Right lobe of liver (tissue), 6 donors: ENCODE measurements at regions of chr11 and their contacts with region 1.

Region 1: DNA sequence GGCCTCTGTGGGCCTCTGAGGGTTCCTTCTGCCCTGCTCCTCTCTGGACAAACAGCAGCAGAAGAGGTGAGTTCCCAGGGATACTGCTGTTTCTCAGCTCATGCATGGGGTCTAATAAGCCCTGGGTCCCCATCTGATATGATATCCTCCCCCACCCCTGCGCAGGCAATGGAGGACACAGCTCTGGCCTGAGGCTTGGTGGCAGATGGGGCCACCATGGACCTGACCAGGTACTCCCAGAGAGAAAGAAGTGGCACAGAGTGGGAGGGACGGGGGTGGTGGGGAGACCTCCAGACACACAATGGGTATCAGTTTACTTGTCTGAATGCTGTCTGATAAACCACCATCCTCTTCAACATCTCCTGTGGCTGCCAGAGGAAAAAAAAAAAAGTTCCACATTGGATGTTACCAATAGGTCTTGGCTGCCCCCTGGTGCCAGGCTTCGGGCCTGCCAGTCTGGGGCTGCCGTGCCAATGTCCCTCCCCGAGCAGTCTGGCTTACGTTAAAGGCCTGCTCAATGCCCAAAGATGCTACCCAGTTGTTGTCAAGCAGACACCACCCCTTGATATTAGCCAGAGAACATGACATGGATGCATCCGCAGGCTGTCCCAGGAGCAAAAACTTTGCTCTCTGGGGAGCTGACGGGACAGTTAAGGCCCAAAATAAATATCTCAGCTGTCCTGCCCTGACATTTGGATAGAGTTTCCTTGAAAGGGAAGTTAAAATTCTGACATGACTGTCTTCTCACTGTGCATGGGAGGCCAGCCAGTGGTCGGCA is 27.9 kb upstream of the ABCC8 start:
- DNase-seq: peak; percentile 82 to 84 (median 82)
- ATAC-seq: peak; percentile 88 to 96 (median 93)
- H3K4me3 ChIP-seq: no peak overlapping the region
- H3K27ac ChIP-seq: no peak overlapping the region
- H3K4me1 ChIP-seq: no peaks in the 10 kb centered on the region
- H3K27me3 ChIP-seq: no peaks in the 10 kb centered on the region
- CTCF ChIP-seq: peak; percentile 92 to 98 (median 94)
- POLR2A ChIP-seq: no peak

Region 2: DNA sequence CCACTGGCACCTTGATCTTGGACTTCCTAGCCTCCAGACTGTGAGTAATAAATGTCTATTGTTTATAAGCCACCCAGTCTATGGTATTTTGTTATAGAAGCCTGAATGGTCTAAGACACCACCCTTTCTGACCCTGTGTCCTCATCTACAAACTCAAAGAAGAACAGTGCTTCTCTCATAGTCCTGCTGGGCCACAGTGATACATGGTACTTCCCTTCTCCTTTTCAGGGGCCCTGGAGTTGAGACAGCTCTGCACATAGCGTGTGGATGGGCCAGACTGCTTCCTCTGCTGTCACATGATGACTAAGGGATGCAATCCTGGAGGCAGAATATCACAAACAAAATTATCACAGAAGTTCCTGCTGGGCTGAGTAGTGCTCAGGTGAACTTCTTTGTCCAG is 121.1 kb before region 1 on chr11:
- intact Hi-C with region 1: loop called (anchors 2 to 5 kb)
- DNase-seq: no peak
- ATAC-seq: peak in 2 of 4 donors; percentile 7 to 9
- H3K4me3 ChIP-seq: no peak overlapping the region
- H3K27ac ChIP-seq: no peak overlapping the region
- H3K4me1 ChIP-seq: no peaks in the 10 kb centered on the region
- H3K27me3 ChIP-seq: no peaks in the 10 kb centered on the region
- CTCF ChIP-seq: no peak
- POLR2A ChIP-seq: no peak

Region 3: GRCh38 chr11:17389211-17389956 is 115.1 kb before region 1 on chr11:
- intact Hi-C with region 1: loop called in 1 of 2 experiments (anchors 5 kb)
- DNase-seq: peak; percentile 83 to 90 (median 85)
- ATAC-seq: peak; percentile 86 to 94 (median 92)
- H3K4me3 ChIP-seq: peak overlapping the region; percentile 47 to 53 (median 51)
- H3K27ac ChIP-seq: peak overlapping the region in 1 of 3 donors; percentile 15
- H3K4me1 ChIP-seq: no peaks in the 10 kb centered on the region
- H3K27me3 ChIP-seq: no peaks in the 10 kb centered on the region
- CTCF ChIP-seq: peak; percentile 69 to 85 (median 78)
- POLR2A ChIP-seq: no peak

Region 4: DNA sequence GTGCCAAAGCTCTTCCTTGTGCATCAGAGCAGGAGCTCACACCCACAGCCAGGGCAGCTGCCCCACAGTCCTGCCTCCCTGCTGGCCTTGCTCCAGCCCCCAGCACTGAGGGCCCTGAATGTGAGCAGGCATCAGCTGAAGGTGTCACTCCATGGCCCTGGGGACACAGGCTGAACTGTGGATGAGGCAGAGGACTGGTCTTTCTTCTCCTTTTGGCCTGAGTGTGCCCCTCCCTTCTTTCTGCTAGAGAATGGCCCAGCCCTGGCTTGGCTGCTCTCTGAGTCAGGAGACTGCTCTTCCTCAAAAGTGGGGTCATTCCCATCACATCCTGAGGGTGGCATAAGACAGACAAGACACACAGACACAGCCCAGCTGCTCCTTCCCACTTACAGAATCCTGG is 58.7 kb after region 1 on chr11:
- intact Hi-C with region 1: no loop called
- DNase-seq: peak in 1 of 3 donors; percentile 36
- ATAC-seq: peak in 2 of 4 donors; percentile 22 to 34
- H3K4me3 ChIP-seq: no peak overlapping the region
- H3K27ac ChIP-seq: no peak overlapping the region
- H3K4me1 ChIP-seq: no peaks in the 10 kb centered on the region
- H3K27me3 ChIP-seq: no peaks in the 10 kb centered on the region
- CTCF ChIP-seq: no peak
- POLR2A ChIP-seq: no peak

Region 5: GRCh38 chr11:17598700-17599459 is 94.4 kb after region 1 on chr11:
- intact Hi-C with region 1: no loop called
- DNase-seq: peak; percentile 71 to 80 (median 77)
- ATAC-seq: peak; percentile 86 to 98 (median 93)
- H3K4me3 ChIP-seq: no peak overlapping the region
- H3K27ac ChIP-seq: no peak overlapping the region
- H3K4me1 ChIP-seq: no peaks in the 10 kb centered on the region
- H3K27me3 ChIP-seq: no peaks in the 10 kb centered on the region
- CTCF ChIP-seq: peak; percentile 88 to 96 (median 91)
- POLR2A ChIP-seq: no peak